MCF 10A (cell line): ENCODE measurements at regions of chr16 and their contacts with region 1.

Region 1: GRCh38 chr16:4957720-4958509 is at the start of gene SEC14L5:
- DNase-seq: peak; percentile 99
- H3K4me3 Mint-ChIP-seq: peak within 1 kb of the TSS; percentile 90
- H3K27ac Mint-ChIP-seq: no peak within 1 kb of the TSS
- H3K4me1 Mint-ChIP-seq: peaks cover 12% of the 10 kb centered on the region
- H3K27me3 Mint-ChIP-seq: peaks cover 14% of the 10 kb centered on the region
- CTCF ChIP-seq: no peak
- total RNA-seq, gene SEC14L5: 0.22 TPM in 1 of 2 replicates, not detected in the other

Region 2: DNA sequence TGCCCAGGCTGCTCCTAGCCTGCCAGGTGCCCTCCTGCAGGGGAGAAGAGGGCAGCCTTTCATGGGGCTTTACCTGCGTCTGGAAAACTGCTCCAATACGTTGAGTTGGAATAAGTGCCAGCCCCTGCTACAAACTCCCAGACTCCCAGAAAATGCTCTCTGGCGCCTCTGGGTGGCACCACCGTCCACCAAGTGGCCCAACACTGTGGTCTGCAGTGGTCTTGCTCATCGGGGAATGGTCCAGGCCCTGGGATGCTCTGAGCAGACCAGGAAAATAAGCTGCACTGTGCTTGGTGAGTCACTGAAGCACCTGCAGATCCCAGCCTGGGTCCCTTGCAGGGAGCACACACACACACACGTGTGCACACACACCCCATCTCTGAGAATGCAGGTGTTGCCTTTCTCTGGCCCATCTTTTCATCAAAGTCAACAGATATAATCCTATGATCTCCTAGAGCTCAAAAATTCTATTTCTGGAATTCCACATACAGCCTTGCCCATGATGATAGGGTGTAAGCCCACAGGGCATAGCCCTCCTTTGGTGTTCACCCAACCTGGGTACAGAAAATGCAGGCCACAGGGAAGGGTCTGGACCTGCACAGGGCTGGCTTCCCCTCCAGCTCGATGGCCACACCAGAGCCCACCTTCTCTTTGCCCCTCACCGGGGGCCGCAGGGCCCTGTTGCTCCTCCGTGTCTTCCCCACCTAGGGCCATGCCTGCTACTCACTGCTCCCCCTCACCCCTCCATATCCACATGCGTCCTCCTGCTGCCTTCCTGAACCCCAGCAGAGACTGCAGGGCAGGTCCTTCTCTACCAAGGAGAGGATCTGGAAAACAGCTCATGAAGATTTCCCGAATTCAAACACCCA is 439.9 kb before region 1 on chr16:
- CTCF ChIA-PET with region 1: no interaction called
- POLR2A ChIA-PET with region 1: no interaction called
- intact Hi-C with region 1: loop called (anchors 5 kb)
- DNase-seq: peak; percentile 38
- H3K4me3 Mint-ChIP-seq: no peak overlapping the region
- H3K27ac Mint-ChIP-seq: no peak overlapping the region
- H3K4me1 Mint-ChIP-seq: no peaks in the 10 kb centered on the region
- H3K27me3 Mint-ChIP-seq: no peaks in the 10 kb centered on the region
- CTCF ChIP-seq: peak; percentile 73

Region 3: GRCh38 chr16:4693296-4693955 is 264.5 kb before region 1 on chr16 and contains the start of gene NUDT16L1:
- CTCF ChIA-PET with region 1: interaction called, 6 read pairs
- POLR2A ChIA-PET with region 1: interaction called, 4 read pairs
- intact Hi-C with region 1: loop called (anchors 5 kb)
- DNase-seq: peak; percentile 94
- H3K4me3 Mint-ChIP-seq: peak within 1 kb of the TSS; percentile 75
- H3K27ac Mint-ChIP-seq: peak within 1 kb of the TSS; percentile 66
- H3K4me1 Mint-ChIP-seq: peaks cover 5% of the 10 kb centered on the region
- H3K27me3 Mint-ChIP-seq: no peaks in the 10 kb centered on the region
- CTCF ChIP-seq: no peak
- total RNA-seq, gene NUDT16L1: 18.3 and 21.8 TPM in 2 replicates

Region 4: GRCh38 chr16:4766874-4767628 is 190.9 kb before region 1 on chr16 and contains the start of gene ZNF500:
- CTCF ChIA-PET with region 1: no interaction called
- POLR2A ChIA-PET with region 1: interaction called, 4 read pairs
- intact Hi-C with region 1: loop called (anchors 1 kb)
- DNase-seq: peak; percentile 95
- H3K4me3 Mint-ChIP-seq: peak within 1 kb of the TSS; percentile 90
- H3K27ac Mint-ChIP-seq: peak within 1 kb of the TSS; percentile 95
- H3K4me1 Mint-ChIP-seq: peaks cover 5% of the 10 kb centered on the region
- H3K27me3 Mint-ChIP-seq: no peaks in the 10 kb centered on the region
- CTCF ChIP-seq: no peak
- total RNA-seq, gene ZNF500: 13.8 and 14.0 TPM in 2 replicates

Region 5: DNA sequence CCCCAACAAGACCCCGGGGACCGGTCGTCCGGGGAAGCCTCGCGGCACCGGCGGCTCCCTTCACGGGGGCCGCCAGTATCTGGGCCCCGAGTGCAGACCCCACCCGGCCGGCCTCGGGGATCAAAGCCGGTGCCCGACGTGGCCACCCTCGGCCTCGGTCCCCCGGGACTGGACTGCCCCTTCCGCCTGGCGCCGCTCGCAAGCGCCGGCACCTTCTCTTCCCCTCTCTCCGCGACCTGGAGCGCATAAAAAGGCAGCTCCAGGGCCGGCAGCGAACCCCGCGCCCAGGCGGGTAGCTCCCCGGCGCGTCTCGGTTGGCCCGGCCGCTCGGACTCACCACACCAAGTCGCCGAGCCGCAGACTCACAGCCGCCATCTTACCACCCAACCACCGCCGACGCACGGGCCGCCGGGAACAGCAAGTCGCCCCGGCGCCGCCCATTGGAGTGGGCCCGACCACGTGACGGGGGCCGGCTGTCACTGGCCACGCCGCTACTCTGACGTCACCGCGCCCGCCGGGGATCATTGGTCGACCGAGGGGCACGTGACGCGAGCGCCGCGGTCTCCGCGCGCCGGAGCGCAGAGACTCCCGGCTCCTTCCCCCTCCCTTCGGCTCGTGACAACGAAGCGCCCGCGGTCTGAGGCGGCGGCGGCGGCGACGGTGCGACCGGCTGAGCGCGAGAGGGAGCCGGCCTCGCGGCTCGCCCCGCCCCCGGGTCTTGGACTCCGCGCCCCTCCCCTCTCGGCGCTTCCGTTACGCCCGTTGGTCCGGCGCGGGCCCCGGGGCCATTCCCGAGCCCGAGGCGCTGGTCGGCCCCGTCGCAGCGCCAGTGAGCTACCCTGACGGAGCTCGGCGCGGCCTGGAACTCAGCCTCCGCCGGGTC is 110.8 kb before region 1 on chr16 and contains the starts of genes GLYR1 and UBN1:
- CTCF ChIA-PET with region 1: interaction called, 21 read pairs
- POLR2A ChIA-PET with region 1: interaction called, 4 read pairs
- intact Hi-C with region 1: loop called (anchors 1 kb)
- DNase-seq: peak; percentile 97
- H3K4me3 Mint-ChIP-seq: peak within 1 kb of the TSS; percentile 96
- H3K27ac Mint-ChIP-seq: peak within 1 kb of the TSS; percentile 95
- H3K4me1 Mint-ChIP-seq: peaks cover 33% of the 10 kb centered on the region
- H3K27me3 Mint-ChIP-seq: no peaks in the 10 kb centered on the region
- CTCF ChIP-seq: no peak
- total RNA-seq, gene GLYR1: 67.3 and 77.3 TPM in 2 replicates
- total RNA-seq, gene UBN1: 33.3 and 38.1 TPM in 2 replicates

Region 6: DNA sequence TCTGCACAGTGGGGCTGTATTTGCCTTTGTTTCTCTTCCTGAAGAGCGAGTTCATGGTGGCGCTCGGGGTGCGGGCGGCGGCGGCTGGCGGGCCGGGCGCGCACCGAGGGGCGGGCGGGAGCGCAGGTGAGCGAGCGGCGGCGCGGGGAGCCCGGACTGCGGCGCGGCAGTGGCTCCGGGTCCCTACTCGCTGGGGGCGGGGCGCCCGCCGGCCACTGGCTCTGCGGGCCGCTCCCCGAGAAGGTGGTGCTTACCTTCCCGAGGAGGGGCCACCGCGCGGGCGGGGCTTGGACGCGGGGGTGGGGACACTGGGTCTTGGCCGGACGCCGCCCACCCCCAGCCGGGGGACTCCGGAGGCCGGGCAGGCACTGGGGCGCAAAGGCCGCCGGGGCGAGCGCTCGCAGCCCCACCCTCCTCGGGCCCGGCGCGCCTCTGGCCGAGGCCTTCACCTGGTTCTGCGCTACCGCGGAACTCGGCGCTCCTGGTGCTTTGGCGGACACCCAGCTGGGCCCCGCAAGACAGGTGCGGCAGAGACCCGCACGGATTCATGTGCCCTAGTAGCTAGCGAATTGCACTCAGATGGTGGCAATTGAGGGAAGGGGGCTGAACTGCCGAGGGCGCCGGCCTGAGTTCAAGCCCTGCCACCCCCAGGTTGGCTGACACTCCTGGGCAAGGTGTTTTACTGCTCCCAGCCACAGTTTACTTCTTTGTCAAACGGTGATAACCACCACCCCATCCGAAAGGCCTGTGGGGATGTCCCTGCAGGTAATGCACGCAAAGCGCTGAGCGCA is 20.7 kb before region 1 on chr16 and contains the start of gene PPL:
- CTCF ChIA-PET with region 1: interaction called, 33 read pairs
- POLR2A ChIA-PET with region 1: interaction called, 13 read pairs
- intact Hi-C with region 1: no loop called
- DNase-seq: peak; percentile 86
- H3K4me3 Mint-ChIP-seq: peak within 1 kb of the TSS; percentile 86
- H3K27ac Mint-ChIP-seq: no peak within 1 kb of the TSS
- H3K4me1 Mint-ChIP-seq: peaks cover 28% of the 10 kb centered on the region
- H3K27me3 Mint-ChIP-seq: no peaks in the 10 kb centered on the region
- CTCF ChIP-seq: no peak
- total RNA-seq, gene PPL: 49.1 and 50.1 TPM in 2 replicates

Region 7: GRCh38 chr16:5025171-5025632 is 67.3 kb after region 1 on chr16:
- CTCF ChIA-PET with region 1: interaction called, 12 read pairs
- POLR2A ChIA-PET with region 1: no interaction called
- intact Hi-C with region 1: no loop called
- DNase-seq: peak; percentile 10
- H3K4me3 Mint-ChIP-seq: no peak overlapping the region
- H3K27ac Mint-ChIP-seq: no peak overlapping the region
- H3K4me1 Mint-ChIP-seq: no peaks in the 10 kb centered on the region
- H3K27me3 Mint-ChIP-seq: peaks cover 15% of the 10 kb centered on the region
- CTCF ChIP-seq: no peak